Sigmoid colon (tissue), 7 donors: ENCODE measurements at regions of chr17 and their contacts with region 1.

Region 1: DNA sequence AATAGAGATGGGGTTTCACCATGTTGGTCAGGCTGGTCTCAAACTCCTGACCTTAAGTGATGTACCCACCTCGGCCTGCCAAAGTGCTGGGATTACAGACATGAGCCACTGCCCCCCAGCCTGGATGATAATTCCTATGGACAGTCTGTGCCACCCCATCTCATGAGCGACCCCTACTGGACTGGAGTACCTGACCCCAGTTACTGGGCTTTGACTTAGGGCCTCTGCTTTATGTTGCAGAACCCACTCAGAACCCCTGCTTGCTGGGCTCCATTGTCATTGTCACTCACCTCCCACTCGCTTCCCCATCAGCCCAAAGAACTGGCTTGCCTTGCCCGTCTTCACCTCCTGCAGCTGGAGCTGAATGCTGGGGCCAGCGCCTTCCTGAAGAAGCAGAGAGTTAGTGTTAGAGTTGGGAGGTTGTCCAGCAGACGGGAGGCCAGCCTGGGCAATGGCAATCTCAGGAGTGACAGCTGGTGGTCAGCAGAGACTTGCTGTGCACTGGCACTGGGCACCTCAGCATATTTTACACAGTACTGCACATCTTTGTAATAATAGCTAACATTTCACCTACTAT is 4.0 kb downstream of the TAC4 start:
- DNase-seq: peak; percentile 41
- H3K4me3 ChIP-seq: no peak overlapping the region
- H3K27ac ChIP-seq: no peak overlapping the region
- H3K4me1 ChIP-seq: peaks cover 0 to 47% (median 38%) of the 10 kb centered on the region in 4 donors
- H3K27me3 ChIP-seq: no peaks in the 10 kb centered on the region
- CTCF ChIP-seq: no peak
- EP300 ChIP-seq: no peak
- POLR2A ChIP-seq: no peak

Region 2: DNA sequence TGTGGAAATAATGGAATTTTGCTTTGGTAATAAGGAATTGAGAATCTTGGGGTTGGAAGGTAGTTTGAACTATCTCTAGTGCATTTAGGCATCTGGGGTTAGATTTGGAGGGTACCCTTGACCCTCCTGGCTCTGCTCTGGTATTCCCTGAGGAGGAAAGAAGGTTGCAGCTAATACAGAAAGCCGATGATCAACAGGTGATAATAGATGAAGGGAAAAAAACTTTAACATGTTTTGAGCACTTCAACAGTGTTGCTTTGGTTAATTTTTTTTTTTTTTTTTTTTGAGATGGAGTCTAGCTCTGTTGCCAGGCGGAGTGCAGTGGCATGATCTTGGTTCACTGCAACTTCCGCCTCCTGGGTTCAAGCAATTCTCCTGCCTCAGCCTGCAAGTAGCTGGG is 50.6 kb before region 1 on chr17:
- intact Hi-C with region 1: loop called (anchors 5 kb)
- DNase-seq: no peak
- H3K4me3 ChIP-seq: no peak overlapping the region
- H3K27ac ChIP-seq: no peak overlapping the region
- H3K4me1 ChIP-seq: peaks cover 0 to 49% (median 42%) of the 10 kb centered on the region in 4 donors
- H3K27me3 ChIP-seq: no peaks in the 10 kb centered on the region
- CTCF ChIP-seq: no peak
- EP300 ChIP-seq: no peak
- POLR2A ChIP-seq: no peak

Region 3: GRCh38 chr17:49815761-49816281 is 28.0 kb before region 1 on chr17:
- intact Hi-C with region 1: no loop called
- DNase-seq: no peak
- H3K4me3 ChIP-seq: no peak overlapping the region
- H3K27ac ChIP-seq: peak overlapping the region in 3 of 4 donors; percentile 20 to 68 (median 39)
- H3K4me1 ChIP-seq: peaks cover 0 to 30% (median 13%) of the 10 kb centered on the region in 4 donors
- H3K27me3 ChIP-seq: no peaks in the 10 kb centered on the region
- CTCF ChIP-seq: no peak
- EP300 ChIP-seq: no peak
- POLR2A ChIP-seq: no peak

Region 4: DNA sequence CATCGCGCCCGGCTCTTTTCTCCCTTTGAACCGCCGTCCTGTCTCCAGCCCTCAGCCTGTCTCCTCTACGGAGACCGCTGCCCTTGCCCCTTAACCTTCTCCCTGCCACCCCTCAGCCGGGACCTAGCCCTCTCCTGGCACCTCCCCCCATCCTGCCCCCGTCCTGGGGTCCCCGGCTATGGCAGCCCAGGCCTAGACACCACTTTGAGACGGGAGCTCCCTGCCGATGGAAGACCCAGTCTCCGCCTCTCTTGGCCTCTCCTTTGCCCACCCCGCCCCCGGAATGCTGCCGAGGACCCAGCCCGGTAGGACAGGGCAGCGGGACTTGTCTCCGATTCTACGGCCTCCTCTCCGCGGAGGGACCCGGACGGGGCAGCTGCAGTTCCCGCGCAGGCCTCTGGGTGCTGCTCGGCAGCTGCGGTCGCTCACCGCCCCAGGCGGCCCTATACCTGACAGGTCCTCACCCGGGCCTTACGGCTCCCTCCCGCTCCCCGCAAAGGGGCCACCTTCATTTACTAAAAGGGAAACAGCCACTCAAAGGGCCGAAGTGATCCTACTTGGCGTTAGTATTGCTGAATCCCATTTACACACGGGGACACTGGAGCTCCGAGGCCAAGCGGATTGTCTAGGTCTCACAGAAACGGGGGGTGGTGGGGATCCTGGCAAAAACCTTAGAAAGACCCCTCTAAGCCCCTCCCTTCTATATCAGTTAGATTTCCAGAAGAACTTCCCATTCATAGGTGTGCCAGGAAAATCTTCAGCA is 36.6 kb after region 1 on chr17:
- intact Hi-C with region 1: no loop called
- DNase-seq: peak; percentile 82
- H3K4me3 ChIP-seq: no peak overlapping the region
- H3K27ac ChIP-seq: no peak overlapping the region
- H3K4me1 ChIP-seq: peaks cover 0 to 10% (median 7%) of the 10 kb centered on the region in 4 donors
- H3K27me3 ChIP-seq: peaks cover 6 to 49% (median 29%) of the 10 kb centered on the region in 3 donors
- CTCF ChIP-seq: peak; percentile 71 to 99 (median 92)
- EP300 ChIP-seq: no peak
- POLR2A ChIP-seq: no peak